ENCODE measurements at regions of chr3 and their contacts with region 1.

Region 1: GRCh38 chr3:191263365-191263764 is 64.3 kb downstream of the OSTN start:
- DNase-seq: no peak
- ATAC-seq: peak; percentile 98
- H3K4me3 ChIP-seq: peak overlapping the region; percentile 10; the same call in 1 of the 2 replicates
- H3K27ac ChIP-seq: peak overlapping the region; percentile 40
- H3K4me1 ChIP-seq: peaks cover 8% of the 10 kb centered on the region; the same call in 1 of the 2 replicates
- H3K27me3 ChIP-seq: no peaks in the 10 kb centered on the region
- CTCF ChIP-seq: no peak
- EP300 ChIP-seq: no peak
- POLR2A ChIP-seq: no peak
- RAD21 ChIP-seq: no peak

Region 2: GRCh38 chr3:191253089-191253799 is 10.1 kb before region 1 on chr3:
- CTCF ChIA-PET with region 1: interaction called, 6 read pairs
- POLR2A ChIA-PET with region 1: interaction called, 7 read pairs
- RAD21 ChIA-PET with region 1: interaction called, 36 read pairs
- SMC1A ChIA-PET with region 1: interaction called, 45 read pairs
- in situ Hi-C with region 1: no loop called
- intact Hi-C with region 1: loop called (anchors 2 kb)
- DNase-seq: peak; percentile 35
- ATAC-seq: peak; percentile 70
- H3K4me3 ChIP-seq: peak overlapping the region; percentile 28; the same call in 1 of the 2 replicates
- H3K27ac ChIP-seq: peak overlapping the region; percentile 42; the same call in 1 of the 2 replicates
- H3K4me1 ChIP-seq: peaks cover 25% of the 10 kb centered on the region
- H3K27me3 ChIP-seq: no peaks in the 10 kb centered on the region
- CTCF ChIP-seq: no peak
- EP300 ChIP-seq: no peak
- POLR2A ChIP-seq: no peak
- RAD21 ChIP-seq: no peak

Region 3: GRCh38 chr3:191290311-191291025 is 27.1 kb after region 1 on chr3:
- CTCF ChIA-PET with region 1: interaction called, 26 read pairs
- POLR2A ChIA-PET with region 1: interaction called, 17 read pairs
- RAD21 ChIA-PET with region 1: interaction called, 55 read pairs
- SMC1A ChIA-PET with region 1: interaction called, 375 read pairs
- in situ Hi-C with region 1: no loop called
- intact Hi-C with region 1: no loop called
- DNase-seq: no peak
- ATAC-seq: peak; percentile 93
- H3K4me3 ChIP-seq: no peak overlapping the region
- H3K27ac ChIP-seq: peak overlapping the region; percentile 68
- H3K4me1 ChIP-seq: peaks cover 13% of the 10 kb centered on the region
- H3K27me3 ChIP-seq: no peaks in the 10 kb centered on the region
- CTCF ChIP-seq: no peak
- EP300 ChIP-seq: no peak
- POLR2A ChIP-seq: no peak
- RAD21 ChIP-seq: no peak

Region 4: DNA sequence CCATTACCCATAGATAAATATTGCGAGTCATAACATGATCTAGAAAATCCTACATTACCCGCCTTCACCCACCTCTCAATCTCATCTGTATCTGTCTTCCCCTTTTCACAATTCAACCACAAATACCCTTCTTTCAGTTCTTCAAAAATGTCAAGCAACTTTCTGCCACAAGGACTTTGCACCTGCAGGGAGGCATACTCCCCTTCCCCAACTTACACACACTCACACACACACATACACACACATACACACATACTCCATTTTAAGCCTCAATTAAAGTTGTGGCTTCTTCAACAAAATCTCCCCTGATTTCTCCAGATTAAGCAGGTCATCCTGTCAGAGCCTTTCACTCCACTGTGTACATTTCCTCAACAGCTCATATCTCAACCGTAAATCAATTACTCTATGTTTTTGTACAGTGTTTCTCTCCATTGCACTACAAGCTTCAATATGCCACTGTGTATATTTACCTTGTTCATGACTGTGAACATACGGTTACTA is 32.7 kb after region 1 on chr3:
- CTCF ChIA-PET with region 1: interaction called, 26 read pairs
- POLR2A ChIA-PET with region 1: interaction called, 17 read pairs
- RAD21 ChIA-PET with region 1: interaction called, 55 read pairs
- SMC1A ChIA-PET with region 1: interaction called, 375 read pairs
- in situ Hi-C with region 1: no loop called
- intact Hi-C with region 1: no loop called
- DNase-seq: peak; percentile 88
- ATAC-seq: peak; percentile 80
- H3K4me3 ChIP-seq: no peak overlapping the region
- H3K27ac ChIP-seq: peak overlapping the region; percentile 5; the same call in 1 of the 2 replicates
- H3K4me1 ChIP-seq: peaks cover 46% of the 10 kb centered on the region
- H3K27me3 ChIP-seq: no peaks in the 10 kb centered on the region
- CTCF ChIP-seq: no peak
- EP300 ChIP-seq: peak; percentile 88 to 98
- POLR2A ChIP-seq: no peak
- RAD21 ChIP-seq: no peak

Region 5: GRCh38 chr3:191307341-191307740 is 44.0 kb after region 1 on chr3:
- CTCF ChIA-PET with region 1: no interaction called
- POLR2A ChIA-PET with region 1: no interaction called
- RAD21 ChIA-PET with region 1: no interaction called
- SMC1A ChIA-PET with region 1: no interaction called
- in situ Hi-C with region 1: no loop called
- intact Hi-C with region 1: no loop called
- DNase-seq: no peak
- ATAC-seq: no peak
- H3K4me3 ChIP-seq: no peak overlapping the region
- H3K27ac ChIP-seq: no peak overlapping the region
- H3K4me1 ChIP-seq: no peaks in the 10 kb centered on the region; the same call in 1 of the 2 replicates
- H3K27me3 ChIP-seq: no peaks in the 10 kb centered on the region
- CTCF ChIP-seq: no peak
- EP300 ChIP-seq: no peak
- POLR2A ChIP-seq: no peak
- RAD21 ChIP-seq: no peak

Measured in GM12878 (cell line).